ENCODE measurements at regions of chr3 and their contacts with region 1.

Region 1: GRCh38 chr3:114152519-114153151 is 26.2 kb downstream of the DRD3 start:
- DNase-seq: peak; percentile 82 to 83
- ATAC-seq: peak; percentile 90 to 96 (median 95)
- H3K4me3 ChIP-seq: peak overlapping the region; percentile 3 to 63 (median 46)
- H3K27ac ChIP-seq: peak overlapping the region in 3 of 10 donors; percentile 3 to 66 (median 7)
- H3K4me1 ChIP-seq: peaks cover 0 to 13% (median 6%) of the 10 kb centered on the region in 9 donors
- H3K27me3 ChIP-seq: no peaks in the 10 kb centered on the region
- CTCF ChIP-seq: peak; percentile 81 to 98 (median 91)

Region 2: DNA sequence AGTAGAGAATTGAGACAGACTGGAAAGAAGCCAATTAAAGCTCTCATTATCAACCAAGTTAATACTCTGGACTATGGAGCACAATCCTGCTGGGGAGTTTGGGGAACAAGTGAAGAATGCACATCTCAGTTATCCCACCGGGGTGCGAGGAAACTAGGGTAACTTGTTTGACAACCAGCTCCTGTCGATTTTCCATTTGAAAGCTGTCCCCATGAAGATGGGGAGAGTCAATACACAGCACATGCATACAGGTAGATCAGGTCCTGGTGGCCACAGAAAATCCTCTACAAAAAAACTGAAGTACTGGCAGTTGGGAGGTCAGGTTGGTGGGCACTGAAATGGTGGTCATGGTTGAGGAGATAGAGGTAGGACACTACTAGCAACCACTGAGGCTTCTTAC is 339.8 kb before region 1 on chr3:
- intact Hi-C with region 1: no loop called
- DNase-seq: no peak
- ATAC-seq: no peak
- H3K4me3 ChIP-seq: no peak overlapping the region
- H3K27ac ChIP-seq: no peak overlapping the region
- H3K4me1 ChIP-seq: no peaks in the 10 kb centered on the region
- H3K27me3 ChIP-seq: no peaks in the 10 kb centered on the region
- CTCF ChIP-seq: no peak

Region 3: DNA sequence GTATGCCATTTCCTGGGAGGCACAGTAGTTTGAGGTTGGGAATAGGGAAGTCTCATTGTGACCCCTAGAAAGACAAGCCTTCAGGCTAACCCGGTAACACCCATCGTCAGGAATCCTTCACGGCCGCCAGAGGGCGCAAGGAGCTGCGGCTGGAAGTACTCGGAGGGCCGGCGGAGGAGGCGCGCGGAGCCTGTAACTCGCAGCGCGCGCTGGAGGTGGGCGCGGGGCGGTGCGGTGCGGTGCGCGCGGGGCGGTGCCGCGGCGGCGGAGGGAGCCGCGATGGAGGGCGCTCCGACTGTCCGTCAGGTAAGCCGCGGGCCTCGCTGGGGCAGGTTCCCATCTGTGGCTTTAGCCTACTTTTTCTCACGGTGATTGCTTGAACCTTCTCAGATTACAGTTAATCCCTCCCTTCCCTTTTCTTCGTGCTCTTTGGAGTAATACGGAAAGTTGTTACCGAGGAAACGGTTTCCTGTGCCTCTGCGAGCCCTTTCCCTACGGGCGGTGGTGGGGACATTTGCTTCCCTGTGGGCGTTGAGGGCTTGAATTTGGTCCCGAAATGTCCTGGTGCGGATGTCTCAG is 313.9 kb before region 1 on chr3 and contains the start of gene GRAMD1C:
- intact Hi-C with region 1: loop called in 3 of 10 experiments (anchors 10 kb)
- DNase-seq: peak; percentile 82 to 86
- ATAC-seq: peak; percentile 91 to 99 (median 98)
- H3K4me3 ChIP-seq: peak within 1 kb of the TSS; percentile 14 to 79 (median 60)
- H3K27ac ChIP-seq: peak within 1 kb of the TSS in 6 of 10 donors; percentile 43 to 71 (median 58)
- H3K4me1 ChIP-seq: peaks cover 0 to 9% (median 2%) of the 10 kb centered on the region in 9 donors
- H3K27me3 ChIP-seq: no peaks in the 10 kb centered on the region
- CTCF ChIP-seq: peak; percentile 72 to 91 (median 84)
- total RNA-seq, gene GRAMD1C: 0.37 to 4.7 (median 1.2) TPM

Region 4: GRCh38 chr3:114056130-114057010 is 96.3 kb before region 1 on chr3 and contains the starts of genes CCDC191 and QTRT2:
- intact Hi-C with region 1: loop called in 1 of 10 experiments (anchors 10 kb)
- DNase-seq: peak; percentile 96 to 100
- ATAC-seq: peak; percentile 99 to 100 (median 100)
- H3K4me3 ChIP-seq: peak within 1 kb of the TSS; percentile 58 to 85 (median 72)
- H3K27ac ChIP-seq: peak within 1 kb of the TSS; percentile 16 to 89 (median 82)
- H3K4me1 ChIP-seq: peaks cover 0 to 31% (median 16%) of the 10 kb centered on the region in 9 donors
- H3K27me3 ChIP-seq: no peaks in the 10 kb centered on the region
- CTCF ChIP-seq: no peak
- total RNA-seq, gene CCDC191: 0.68 to 3.6 (median 1.8) TPM
- total RNA-seq, gene QTRT2: 3.6 to 9.7 (median 5.2) TPM

Region 5: GRCh38 chr3:114323546-114324254 is 171.1 kb after region 1 on chr3:
- intact Hi-C with region 1: loop called in 1 of 10 experiments (anchors 10 kb)
- DNase-seq: no peak
- ATAC-seq: no peak
- H3K4me3 ChIP-seq: no peak overlapping the region
- H3K27ac ChIP-seq: peak overlapping the region in 1 of 10 donors; percentile 17
- H3K4me1 ChIP-seq: peaks cover 0 to 14% (median 7%) of the 10 kb centered on the region in 9 donors
- H3K27me3 ChIP-seq: no peaks in the 10 kb centered on the region
- CTCF ChIP-seq: no peak

Measured in heart right ventricle (tissue), 16 donors.